HepG2 (cell line): ENCODE measurements at regions of chr17 and their contacts with region 1.

Region 1: GRCh38 chr17:79027925-79028813 is 4.2 kb downstream of the C1QTNF1 start:
- DNase-seq: peak; percentile 39
- ATAC-seq: peak; percentile 28
- H3K4me3 ChIP-seq: peak overlapping the region; percentile 56 to 82 (median 57); a peak in 5 of 6 replicates
- H3K27ac ChIP-seq: peak overlapping the region; percentile 95
- H3K4me1 ChIP-seq: peaks cover 71% of the 10 kb centered on the region
- H3K27me3 ChIP-seq: peaks cover 0 to 22% of the 10 kb centered on the region in 2 experiments; a peak in 2 of 5 replicates
- CTCF ChIP-seq: peak; percentile 55
- EP300 ChIP-seq: no peak; a peak in 1 of 4 replicates
- POLR2A ChIP-seq: no peak
- RAD21 ChIP-seq: no peak

Region 2: DNA sequence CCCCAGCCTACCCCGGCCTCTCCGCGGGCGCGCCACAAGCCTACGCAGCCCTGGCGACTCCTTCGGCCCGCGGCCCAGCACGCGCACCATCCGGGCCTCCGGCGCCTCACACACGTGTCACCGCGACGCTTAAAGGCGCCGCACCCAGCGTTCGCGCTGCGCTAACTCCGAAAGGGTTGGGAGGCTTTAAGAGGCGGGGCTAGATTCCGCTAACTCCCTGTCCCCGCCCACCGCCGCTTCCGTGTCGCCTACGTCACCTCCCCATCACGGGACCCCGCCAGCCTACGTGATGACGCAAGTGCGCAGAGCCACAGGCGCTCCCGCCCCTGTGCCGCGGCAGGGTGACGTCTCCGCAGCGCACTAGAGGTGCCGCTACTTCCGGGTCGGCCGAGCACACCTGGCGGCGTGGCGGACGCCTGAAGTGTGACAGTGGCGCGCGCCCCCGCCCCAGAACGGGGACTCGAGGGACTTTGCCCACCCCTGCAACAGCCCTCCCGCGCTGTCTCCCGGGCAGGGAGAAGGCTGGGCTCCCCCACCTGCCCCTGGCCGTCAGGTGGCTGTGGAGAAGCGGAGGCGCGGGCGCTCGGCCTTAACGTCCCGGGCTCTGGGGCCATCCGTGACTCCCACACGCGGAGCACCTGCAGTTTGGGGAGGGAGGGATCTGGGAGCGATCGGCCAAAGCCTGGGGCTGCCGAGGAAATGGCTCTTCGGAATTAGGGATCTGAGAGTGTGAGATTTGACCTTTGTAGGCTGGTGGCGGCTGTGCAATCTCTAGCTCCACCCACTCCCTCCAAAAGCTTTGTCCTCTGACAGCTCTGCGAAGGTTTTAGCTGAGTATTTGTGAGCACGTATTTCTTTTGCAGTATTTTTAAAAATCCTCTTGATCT is 187.2 kb before region 1 on chr17 and contains the start of gene USP36:
- CTCF ChIA-PET with region 1: no interaction called
- POLR2A ChIA-PET with region 1: interaction called, 10 read pairs
- in situ Hi-C with region 1: no loop called
- intact Hi-C with region 1: no loop called
- DNase-seq: peak; percentile 98
- ATAC-seq: peak; percentile 88
- H3K4me3 ChIP-seq: peak within 1 kb of the TSS; percentile 71 to 99 (median 91)
- H3K27ac ChIP-seq: peak within 1 kb of the TSS; percentile 91
- H3K4me1 ChIP-seq: peaks cover 60% of the 10 kb centered on the region
- H3K27me3 ChIP-seq: no peaks in the 10 kb centered on the region; a peak in 1 of 5 replicates
- CTCF ChIP-seq: peak; percentile 55
- EP300 ChIP-seq: peak in 1 of 2 experiments; percentile 54; a peak in 1 of 4 replicates
- POLR2A ChIP-seq: peak; percentile 57 to 91
- RAD21 ChIP-seq: no peak; the same call in none of the 2 replicates
- total RNA-seq, gene USP36: 29.6 and 30.7 TPM in 2 replicates

Region 3: DNA sequence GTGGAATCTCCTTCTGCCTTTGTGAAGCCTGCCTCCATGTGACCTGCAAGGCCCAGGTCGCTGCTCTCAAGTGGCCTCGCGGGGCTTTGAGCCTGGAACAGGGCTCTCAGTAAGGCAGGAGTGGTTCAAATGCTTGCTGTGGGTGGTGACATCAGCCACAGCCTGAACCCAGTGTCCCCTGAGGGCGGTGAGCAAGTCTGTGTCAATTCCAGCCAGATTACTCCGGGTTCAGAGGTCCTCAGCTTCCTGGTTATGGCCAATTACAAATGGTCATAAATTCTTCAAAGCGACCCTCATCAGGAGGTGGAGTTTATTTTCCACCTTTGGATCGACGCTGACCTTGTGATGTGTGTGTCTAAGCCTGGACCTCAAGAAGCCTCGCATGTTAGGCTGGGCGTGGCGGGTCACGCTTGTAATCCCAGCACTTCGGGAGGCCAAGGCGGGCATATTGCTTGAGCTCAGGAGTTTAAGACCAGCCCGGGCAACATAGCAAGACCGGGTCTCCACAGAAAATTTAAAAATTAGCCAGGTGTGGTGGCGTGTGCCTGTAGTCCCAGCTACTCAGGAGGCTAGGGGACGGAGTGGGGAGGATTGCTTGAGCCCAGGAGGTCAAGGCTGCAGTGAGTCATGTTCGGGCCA is 65.7 kb before region 1 on chr17:
- CTCF ChIA-PET with region 1: no interaction called
- POLR2A ChIA-PET with region 1: interaction called, 29 read pairs
- in situ Hi-C with region 1: no loop called
- intact Hi-C with region 1: no loop called
- DNase-seq: peak; percentile 96
- ATAC-seq: peak; percentile 91
- H3K4me3 ChIP-seq: no peak overlapping the region
- H3K27ac ChIP-seq: peak overlapping the region; percentile 70
- H3K4me1 ChIP-seq: peaks cover 61% of the 10 kb centered on the region
- H3K27me3 ChIP-seq: peaks cover 0 to 1% of the 10 kb centered on the region in 2 experiments; a peak in 3 of 5 replicates
- CTCF ChIP-seq: peak; percentile 24
- EP300 ChIP-seq: peak; percentile 79 to 85
- POLR2A ChIP-seq: peak; percentile 46 to 60; a peak in 3 of 4 replicates
- RAD21 ChIP-seq: peak; percentile 10; the same call in 1 of the 2 replicates

Region 4: DNA sequence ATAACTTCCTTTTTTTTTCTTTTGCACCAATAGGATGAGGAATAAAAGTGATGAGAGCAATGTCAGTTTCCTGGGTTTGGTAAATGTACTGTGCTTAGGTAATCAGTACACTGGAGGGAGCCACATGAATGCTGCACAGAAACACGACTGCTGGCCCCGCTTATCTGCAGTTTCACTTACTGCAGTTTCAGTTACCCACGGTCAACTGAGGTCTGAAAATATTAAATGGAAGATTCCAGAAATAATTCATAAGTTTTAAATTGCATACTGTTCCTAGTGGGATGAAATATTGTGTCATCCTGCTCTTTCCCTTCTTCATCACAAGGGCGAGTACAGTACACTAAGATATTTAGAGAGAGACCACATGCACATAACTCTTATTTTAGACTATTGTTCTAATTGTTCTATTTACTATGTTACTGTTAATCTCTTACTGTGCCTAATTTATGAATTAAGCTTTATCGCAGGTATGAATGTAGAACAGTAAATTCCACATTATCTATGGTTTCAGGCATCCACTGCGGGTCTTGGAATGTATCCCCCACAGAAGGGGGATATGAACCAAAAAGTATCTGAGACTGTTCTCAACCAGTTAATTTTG is 42.0 kb before region 1 on chr17:
- CTCF ChIA-PET with region 1: no interaction called
- POLR2A ChIA-PET with region 1: interaction called, 49 read pairs
- in situ Hi-C with region 1: no loop called
- intact Hi-C with region 1: loop called (anchors 5 kb)
- DNase-seq: peak; percentile 43
- ATAC-seq: peak; percentile 82
- H3K4me3 ChIP-seq: peak overlapping the region; percentile 46 to 61 (median 57)
- H3K27ac ChIP-seq: peak overlapping the region; percentile 19
- H3K4me1 ChIP-seq: peaks cover 32% of the 10 kb centered on the region
- H3K27me3 ChIP-seq: no peaks in the 10 kb centered on the region
- CTCF ChIP-seq: peak; percentile 67
- EP300 ChIP-seq: no peak
- POLR2A ChIP-seq: no peak
- RAD21 ChIP-seq: no peak

Region 5: GRCh38 chr17:79074650-79075445 is 46.7 kb after region 1 on chr17 and contains the start of gene ENGASE:
- CTCF ChIA-PET with region 1: no interaction called
- POLR2A ChIA-PET with region 1: interaction called, 95 read pairs
- in situ Hi-C with region 1: no loop called
- intact Hi-C with region 1: no loop called
- DNase-seq: peak; percentile 88
- ATAC-seq: peak; percentile 96
- H3K4me3 ChIP-seq: peak within 1 kb of the TSS; percentile 78 to 87 (median 83)
- H3K27ac ChIP-seq: peak within 1 kb of the TSS; percentile 47
- H3K4me1 ChIP-seq: peaks cover 41% of the 10 kb centered on the region
- H3K27me3 ChIP-seq: peaks cover 0 to 17% of the 10 kb centered on the region in 2 experiments; a peak in 2 of 5 replicates
- CTCF ChIP-seq: no peak
- EP300 ChIP-seq: no peak
- POLR2A ChIP-seq: peak; percentile 48 to 84; a peak in 3 of 4 replicates
- RAD21 ChIP-seq: no peak; the same call in 1 of the 2 replicates
- total RNA-seq, gene ENGASE: 2.8 and 10.6 TPM in 2 replicates